CD4-positive, alpha-beta memory T cell (primary cell): ENCODE measurements at regions of chr17 and their contacts with region 1.

Region 1: GRCh38 chr17:3012926-3013581 is 50.4 kb downstream of the OR1D5 start:
- DNase-seq: peak in 4 of 5 donors; percentile 24 to 36 (median 30)
- H3K4me3 ChIP-seq: no peak overlapping the region
- H3K4me3 Mint-ChIP-seq: no peak overlapping the region
- H3K27ac ChIP-seq: no peak overlapping the region
- H3K27ac Mint-ChIP-seq: peak overlapping the region in 3 of 7 donors; percentile 10 to 29 (median 29)
- H3K4me1 ChIP-seq: no peaks in the 10 kb centered on the region
- H3K4me1 Mint-ChIP-seq: no peaks in the 10 kb centered on the region
- H3K27me3 ChIP-seq: no peaks in the 10 kb centered on the region
- H3K27me3 Mint-ChIP-seq: no peaks in the 10 kb centered on the region

Region 2: DNA sequence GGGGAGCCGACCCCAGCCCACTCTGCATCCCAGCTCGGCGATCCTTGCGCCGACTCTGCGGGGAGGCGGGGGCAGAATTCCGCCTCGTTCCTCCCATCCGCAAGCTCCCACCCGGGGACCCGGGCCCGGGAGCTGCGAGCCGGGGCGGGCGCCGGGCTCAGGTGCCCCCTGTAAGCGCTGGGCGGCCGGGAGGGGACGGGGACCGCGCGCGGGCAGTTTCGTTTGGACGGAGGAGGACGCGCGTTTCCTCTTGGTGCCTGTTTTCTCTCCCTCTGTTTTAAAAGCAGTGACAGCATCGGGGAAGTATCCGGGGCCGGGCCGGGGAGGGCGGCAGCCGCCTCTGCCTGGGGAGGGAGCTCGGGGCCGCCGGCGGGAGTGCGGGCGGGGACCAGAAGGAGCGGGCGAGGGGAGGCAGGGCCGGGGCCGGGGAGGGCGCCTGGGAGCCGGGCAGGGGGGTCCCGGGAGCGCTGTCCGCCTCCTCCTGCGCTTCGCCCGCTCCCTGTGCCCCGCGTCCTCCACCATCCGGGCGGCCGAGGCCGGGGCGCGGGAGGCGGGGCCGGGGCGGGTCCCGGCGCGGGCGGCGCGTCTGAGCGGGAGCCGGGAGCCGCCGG is 159.8 kb before region 1 on chr17:
- CTCF ChIA-PET with region 1: interaction called, 65 read pairs
- POLR2A ChIA-PET with region 1: interaction called, 7 read pairs
- intact Hi-C with region 1: loop called (anchors 1 kb)
- DNase-seq: peak in 4 of 5 donors; percentile 39 to 48 (median 40)
- H3K4me3 ChIP-seq: peak overlapping the region in 1 of 2 donors; percentile 32
- H3K4me3 Mint-ChIP-seq: peak overlapping the region in 6 of 8 donors; percentile 29 to 78 (median 64)
- H3K27ac ChIP-seq: no peak overlapping the region
- H3K27ac Mint-ChIP-seq: no peak overlapping the region
- H3K4me1 ChIP-seq: peaks cover 21% of the 10 kb centered on the region
- H3K4me1 Mint-ChIP-seq: peaks cover 19 to 48% (median 34%) of the 10 kb centered on the region in 4 donors
- H3K27me3 ChIP-seq: peaks cover 4% of the 10 kb centered on the region
- H3K27me3 Mint-ChIP-seq: peaks cover 3% of the 10 kb centered on the region in 2 donors